Activated CD8-positive, alpha-beta memory T cell treated with anti-CD3 and anti-CD28 coated beads, Interleukin-2, amount 10 ng/mL, durations not matched to agents 7 days and 5 days (primary cell): ENCODE measurements at regions of chr19 and their contacts with region 1.

Region 1: DNA sequence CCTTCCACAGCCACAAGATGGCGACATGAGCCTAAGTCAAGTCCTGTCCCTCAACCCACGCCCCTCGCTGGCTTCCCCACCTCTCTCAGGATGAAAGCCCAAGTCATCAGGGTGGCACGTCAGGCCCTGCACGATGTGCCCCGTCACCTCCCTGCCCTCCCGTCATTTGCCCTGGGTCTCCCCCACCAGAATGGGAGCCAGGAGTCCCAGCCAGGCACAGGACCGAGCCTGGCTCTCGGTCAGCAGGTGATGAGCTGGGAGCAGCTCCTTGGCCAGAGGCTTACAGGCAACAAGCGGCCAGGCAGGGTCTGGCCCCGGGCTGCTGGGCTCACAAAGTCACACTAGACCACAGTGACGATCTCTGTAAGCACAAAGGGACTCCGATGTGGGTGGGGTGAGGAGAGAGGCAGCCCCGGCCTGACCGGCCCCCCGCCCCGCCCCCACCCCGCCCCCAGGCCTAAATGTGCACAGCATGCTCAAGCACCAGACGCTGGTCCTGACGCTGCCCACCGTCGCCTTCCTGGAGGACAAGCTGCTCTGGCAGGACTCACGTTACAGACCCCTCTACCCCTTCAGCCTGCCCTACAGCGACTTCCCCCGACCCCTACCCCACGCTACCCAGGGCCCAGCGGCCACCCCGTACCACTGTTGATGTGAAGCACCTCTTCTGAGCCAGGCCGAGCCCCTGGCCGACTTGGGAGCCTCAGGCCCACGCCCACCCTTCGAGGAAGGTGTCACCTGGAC is 7.3 kb downstream of the MRPL4 start:
- DNase-seq: peak; percentile 96
- ATAC-seq: peak; percentile 78
- H3K4me3 Mint-ChIP-seq: no peak overlapping the region
- H3K27ac Mint-ChIP-seq: peak overlapping the region; percentile 67
- H3K4me1 Mint-ChIP-seq: peaks cover 37% of the 10 kb centered on the region
- H3K27me3 Mint-ChIP-seq: no peaks in the 10 kb centered on the region

Region 2: GRCh38 chr19:10286803-10287737 is 27.7 kb after region 1 on chr19 and contains the start of gene ICAM4:
- CTCF ChIA-PET with region 1: interaction called, 20 read pairs
- DNase-seq: peak; percentile 68
- ATAC-seq: peak; percentile 34
- H3K4me3 Mint-ChIP-seq: peak within 1 kb of the TSS; percentile 20
- H3K27ac Mint-ChIP-seq: peak within 1 kb of the TSS; percentile 56
- H3K4me1 Mint-ChIP-seq: peaks cover 61% of the 10 kb centered on the region
- H3K27me3 Mint-ChIP-seq: peaks cover 41% of the 10 kb centered on the region
- total RNA-seq, gene ICAM4: 0.89 to 0.99 TPM

Region 3: DNA sequence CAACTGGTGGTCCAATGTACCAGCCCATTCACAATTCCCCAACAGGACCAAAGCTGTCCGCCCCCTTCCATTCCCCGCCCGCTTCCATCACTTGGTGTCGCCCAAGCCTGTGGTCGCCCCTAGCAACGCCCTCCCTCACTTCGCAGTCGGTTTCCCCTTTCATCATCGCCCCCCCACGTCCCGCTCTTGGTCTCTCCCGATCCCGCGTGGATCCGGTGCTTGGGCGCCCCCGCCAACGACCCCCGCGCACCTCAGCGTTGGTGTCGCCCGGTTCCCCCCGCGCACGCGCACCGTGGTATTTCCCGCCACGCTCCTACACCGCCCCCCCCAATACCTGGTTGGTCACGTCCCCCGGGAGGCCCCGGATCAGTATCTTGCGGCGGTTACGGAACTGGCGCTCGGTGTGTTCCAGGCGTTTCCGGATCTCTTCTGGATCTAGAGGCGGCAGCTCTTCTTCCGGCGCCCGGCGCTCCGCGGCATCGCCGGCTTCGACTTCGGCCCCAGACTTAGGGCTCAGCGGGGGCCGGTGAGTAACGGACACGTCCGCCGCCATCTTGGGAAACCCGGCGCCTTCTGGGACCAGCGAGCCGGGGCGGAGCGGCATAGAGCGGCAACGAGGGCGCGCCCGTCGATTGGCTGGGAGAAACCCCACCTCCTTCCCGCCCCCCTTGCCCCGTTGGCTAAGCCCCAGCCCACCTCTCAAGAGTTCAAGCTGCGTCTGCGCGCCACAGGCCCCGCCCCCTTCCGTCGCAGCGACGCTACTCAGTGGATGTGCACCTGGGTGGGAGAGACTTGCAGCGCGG is 73.8 kb after region 1 on chr19 and contains the start of gene RAVER1:
- CTCF ChIA-PET with region 1: interaction called, 14 read pairs
- DNase-seq: peak; percentile 99
- ATAC-seq: peak; percentile 97
- H3K4me3 Mint-ChIP-seq: peak within 1 kb of the TSS; percentile 99
- H3K27ac Mint-ChIP-seq: peak within 1 kb of the TSS; percentile 94
- H3K4me1 Mint-ChIP-seq: peaks cover 42% of the 10 kb centered on the region
- H3K27me3 Mint-ChIP-seq: no peaks in the 10 kb centered on the region
- total RNA-seq, gene RAVER1: 87.0 to 87.8 TPM

Region 4: GRCh38 chr19:10380313-10381102 is 121.2 kb after region 1 on chr19 and contains the start of gene TYK2:
- CTCF ChIA-PET with region 1: interaction called, 339 read pairs
- DNase-seq: peak; percentile 98
- ATAC-seq: peak; percentile 97
- H3K4me3 Mint-ChIP-seq: peak within 1 kb of the TSS; percentile 90
- H3K27ac Mint-ChIP-seq: peak within 1 kb of the TSS; percentile 94
- H3K4me1 Mint-ChIP-seq: peaks cover 21% of the 10 kb centered on the region
- H3K27me3 Mint-ChIP-seq: no peaks in the 10 kb centered on the region
- total RNA-seq, gene TYK2: 277 to 296 TPM

Region 5: DNA sequence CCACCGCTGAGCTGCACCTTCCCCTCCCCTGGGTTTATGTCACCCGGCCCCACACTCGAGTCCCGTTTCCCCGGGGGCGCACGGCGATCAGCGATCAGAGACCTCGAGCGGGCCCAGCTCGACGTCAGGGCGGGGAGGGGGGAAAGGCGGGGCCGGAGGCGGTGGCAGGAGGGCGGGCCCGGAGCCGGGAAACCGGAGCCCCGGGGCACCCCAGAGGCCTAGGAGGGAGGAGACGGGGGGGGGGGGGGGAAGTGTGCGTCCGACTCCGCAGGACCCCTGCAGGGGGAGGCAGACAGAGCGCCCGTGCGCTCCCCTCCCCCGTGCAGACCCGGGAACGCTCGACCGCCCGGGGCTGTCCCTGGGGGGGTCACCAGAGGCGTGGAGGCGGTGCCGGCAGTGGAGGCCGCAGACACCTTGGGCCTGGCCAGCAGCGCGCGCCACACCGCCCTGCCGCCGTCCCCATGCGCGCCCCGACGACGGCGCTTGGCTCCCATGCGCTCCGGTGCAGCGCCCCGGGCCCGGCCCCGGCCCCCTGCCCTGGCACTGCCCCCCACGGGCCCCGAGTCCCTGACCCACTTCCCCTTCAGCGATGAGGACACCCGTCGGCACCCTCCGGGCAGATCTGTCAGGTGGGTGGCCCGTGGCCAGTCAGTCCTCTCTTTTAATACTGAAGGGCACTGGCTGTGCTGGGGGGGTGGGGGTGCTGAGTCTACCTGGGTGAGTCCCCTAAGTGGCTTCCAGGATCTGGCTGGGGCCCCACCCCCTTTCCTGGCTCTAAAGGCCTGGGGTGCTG is 172.8 kb after region 1 on chr19:
- CTCF ChIA-PET with region 1: interaction called, 15 read pairs
- DNase-seq: peak; percentile 75
- ATAC-seq: peak; percentile 49
- H3K4me3 Mint-ChIP-seq: peak overlapping the region; percentile 80
- H3K27ac Mint-ChIP-seq: peak overlapping the region; percentile 96
- H3K4me1 Mint-ChIP-seq: peaks cover 75% of the 10 kb centered on the region
- H3K27me3 Mint-ChIP-seq: peaks cover 6% of the 10 kb centered on the region